Posterior vena cava (tissue), 2 donors: ENCODE measurements at regions of chr7 and their contacts with region 1.

Region 1: DNA sequence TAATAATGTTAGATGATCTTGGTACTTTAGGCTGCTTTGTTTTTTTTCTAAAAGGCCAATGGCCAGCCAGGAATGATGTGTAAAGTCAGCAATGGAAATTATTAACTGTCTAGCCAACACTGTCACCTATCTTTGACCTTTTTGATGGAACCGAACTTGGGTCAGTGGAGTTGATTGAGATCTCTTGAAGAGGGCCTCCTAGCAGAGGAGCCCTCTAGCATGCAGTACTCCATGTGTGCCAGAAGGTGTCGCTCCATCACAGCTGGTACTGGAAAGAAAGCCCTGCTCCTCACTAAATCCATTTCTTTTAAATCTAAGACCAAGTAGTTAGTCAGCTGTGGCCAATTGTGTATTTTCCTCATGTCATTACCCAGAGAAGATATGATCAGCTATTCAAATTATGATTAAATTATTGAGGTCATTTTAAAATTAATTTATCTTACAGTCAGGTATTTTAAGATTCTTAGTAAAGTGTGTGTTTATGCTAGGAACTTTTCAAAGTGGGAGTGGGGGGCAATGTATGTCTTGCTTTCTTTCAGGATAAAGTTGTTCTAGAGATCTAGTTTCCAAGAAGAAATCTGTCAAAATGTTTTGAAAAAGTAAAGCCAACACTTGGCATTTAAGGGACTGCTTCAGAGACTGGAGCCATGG is 33.1 kb upstream of the CROT start:
- DNase-seq: no peak

Region 2: DNA sequence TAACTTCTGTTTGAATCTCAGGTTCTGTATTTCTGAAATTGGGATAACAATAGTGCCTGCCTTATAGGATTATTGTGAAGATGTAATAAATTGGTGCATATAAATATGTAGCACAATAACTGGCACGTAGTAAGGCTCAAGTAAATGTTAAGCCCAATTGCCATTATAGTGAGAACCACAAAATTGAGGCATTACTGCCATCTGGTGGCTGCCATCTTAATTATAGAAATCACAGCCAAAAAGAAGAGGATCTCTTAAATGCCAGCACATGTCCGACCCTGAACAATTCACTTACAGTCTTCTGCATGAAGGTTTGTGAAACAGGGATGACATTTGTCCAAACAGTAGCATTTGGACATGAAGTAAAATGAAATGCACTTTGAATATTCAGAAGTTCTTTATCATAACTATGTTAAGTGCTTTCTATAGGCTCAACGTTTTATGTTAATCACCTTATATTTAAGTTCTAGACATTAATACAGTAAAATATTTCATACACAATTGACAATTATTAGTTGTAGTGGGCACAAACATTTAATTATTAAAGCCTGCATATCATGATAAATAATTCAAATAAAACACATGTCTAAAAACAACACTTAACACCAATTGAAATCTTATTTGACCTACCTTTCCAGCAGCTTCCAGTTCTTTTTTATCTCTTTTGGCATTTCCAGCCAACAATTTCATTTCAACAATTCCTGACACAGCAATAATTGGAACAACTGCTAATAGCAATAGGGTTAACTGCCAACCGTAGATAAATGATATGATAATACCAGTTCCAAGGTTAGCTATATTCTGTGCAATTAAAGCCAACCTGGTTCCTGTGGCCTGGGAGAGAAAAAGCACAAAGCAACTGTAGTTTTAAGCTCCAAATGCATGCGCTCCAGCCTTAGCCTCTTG is 104.6 kb after region 1 on chr7:
- intact Hi-C with region 1: loop called (anchors 2 kb)
- DNase-seq: no peak